ENCODE measurements at regions of chr12 and their contacts with region 1.

Region 1: GRCh38 chr12:28294300-28294699 is 104.0 kb downstream of the CCDC91 start:
- DNase-seq: no peak
- H3K4me3 ChIP-seq: no peak overlapping the region
- H3K27ac ChIP-seq: no peak overlapping the region
- H3K4me1 ChIP-seq: no peaks in the 10 kb centered on the region
- H3K27me3 ChIP-seq: no peaks in the 10 kb centered on the region
- CTCF ChIP-seq: no peak
- POLR2A ChIP-seq: no peak

Region 2: DNA sequence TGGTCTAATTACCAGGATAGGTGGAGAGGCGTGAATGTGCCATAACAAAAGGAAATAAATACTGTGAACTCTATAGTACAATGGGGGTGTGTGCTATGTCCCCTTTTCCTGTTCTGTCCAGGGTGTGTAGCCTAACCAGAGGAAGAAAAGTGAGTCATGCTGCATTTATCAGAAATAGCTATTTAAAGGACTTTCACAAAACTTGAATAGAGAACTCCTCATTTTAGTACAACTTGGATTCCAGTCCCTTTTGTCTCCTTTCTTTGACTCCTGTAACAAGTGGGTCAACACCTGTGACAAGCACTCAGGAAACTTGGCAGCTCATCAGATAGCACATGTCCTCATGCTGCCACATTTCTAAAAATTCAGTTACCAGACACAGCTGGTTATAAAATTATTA is 19.3 kb after region 1 on chr12:
- CTCF ChIA-PET with region 1: interaction called, 3 read pairs
- POLR2A ChIA-PET with region 1: no interaction called
- dilution Hi-C with region 1: no loop called
- intact Hi-C with region 1: loop called (anchors 2 kb)
- DNase-seq: peak; percentile 78
- H3K4me3 ChIP-seq: peak overlapping the region in 1 of 3 experiments; percentile 11
- H3K27ac ChIP-seq: peak overlapping the region; percentile 76
- H3K4me1 ChIP-seq: peaks cover 17% of the 10 kb centered on the region
- H3K27me3 ChIP-seq: no peaks in the 10 kb centered on the region
- CTCF ChIP-seq: no peak
- POLR2A ChIP-seq: no peak

Region 3: DNA sequence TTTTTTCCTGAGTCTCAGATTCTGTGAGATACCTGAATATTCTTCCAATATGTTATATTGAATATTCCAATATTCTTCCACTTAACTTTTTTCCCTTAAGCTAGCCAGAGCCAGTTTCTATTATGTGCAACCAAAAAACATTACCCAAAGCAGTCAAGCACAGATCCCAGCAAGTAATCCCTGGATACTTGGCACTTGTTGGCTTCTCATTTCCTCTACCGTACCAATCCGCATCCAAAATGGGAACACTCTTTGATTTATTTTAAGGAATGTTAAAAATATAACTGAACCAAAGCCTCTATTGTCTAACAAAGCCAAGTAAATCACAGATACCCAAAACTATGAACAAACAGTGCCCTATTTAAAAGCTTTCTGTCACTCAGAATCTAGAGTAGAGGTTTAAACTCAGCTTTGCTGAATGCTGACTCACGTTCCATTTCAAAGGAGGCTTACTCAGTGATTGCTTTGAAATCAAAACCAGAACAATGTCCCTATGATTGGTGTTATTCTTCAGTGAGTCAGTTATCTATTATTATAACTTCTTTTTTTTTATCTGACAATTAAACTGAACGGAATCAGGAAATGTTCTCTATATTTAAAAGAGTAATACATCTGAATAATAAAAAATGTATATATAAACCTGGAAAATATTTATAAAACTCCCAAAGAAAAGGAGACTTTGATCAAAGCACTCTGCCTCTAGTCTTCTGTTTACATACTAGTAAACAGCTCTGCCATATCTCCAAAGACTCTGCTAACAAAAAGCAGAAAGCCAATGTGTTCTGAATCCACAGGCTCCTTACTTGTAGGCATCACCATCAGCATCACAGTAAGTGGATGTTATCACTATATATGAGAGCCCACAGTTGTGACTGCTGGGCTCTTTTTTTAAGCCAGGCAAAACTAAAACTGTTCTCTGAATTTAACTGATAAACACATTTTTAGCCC is 256.7 kb after region 1 on chr12:
- CTCF ChIA-PET with region 1: no interaction called
- POLR2A ChIA-PET with region 1: no interaction called
- dilution Hi-C with region 1: no loop called
- intact Hi-C with region 1: no loop called
- DNase-seq: peak; percentile 72
- H3K4me3 ChIP-seq: no peak overlapping the region
- H3K27ac ChIP-seq: peak overlapping the region; percentile 73
- H3K4me1 ChIP-seq: peaks cover 6% of the 10 kb centered on the region
- H3K27me3 ChIP-seq: no peaks in the 10 kb centered on the region
- CTCF ChIP-seq: no peak
- POLR2A ChIP-seq: no peak

Measured in endothelial cell of umbilical vein (primary cell).